ENCODE measurements at regions of chr17 and their contacts with region 1.

Region 1: GRCh38 chr17:67689534-67690177 is 28.1 kb upstream of the NOL11 start:
- DNase-seq: peak in 1 of 2 experiments; percentile 68
- H3K4me3 ChIP-seq: no peak overlapping the region
- H3K4me3 Mint-ChIP-seq: no peak overlapping the region
- H3K27ac Mint-ChIP-seq: no peak overlapping the region
- H3K4me1 ChIP-seq: no peaks in the 10 kb centered on the region
- H3K4me1 Mint-ChIP-seq: no peaks in the 10 kb centered on the region
- H3K27me3 ChIP-seq: no peaks in the 10 kb centered on the region
- H3K27me3 Mint-ChIP-seq: peaks cover 2% of the 10 kb centered on the region
- CTCF ChIP-seq: peak; percentile 67 to 76

Region 2: DNA sequence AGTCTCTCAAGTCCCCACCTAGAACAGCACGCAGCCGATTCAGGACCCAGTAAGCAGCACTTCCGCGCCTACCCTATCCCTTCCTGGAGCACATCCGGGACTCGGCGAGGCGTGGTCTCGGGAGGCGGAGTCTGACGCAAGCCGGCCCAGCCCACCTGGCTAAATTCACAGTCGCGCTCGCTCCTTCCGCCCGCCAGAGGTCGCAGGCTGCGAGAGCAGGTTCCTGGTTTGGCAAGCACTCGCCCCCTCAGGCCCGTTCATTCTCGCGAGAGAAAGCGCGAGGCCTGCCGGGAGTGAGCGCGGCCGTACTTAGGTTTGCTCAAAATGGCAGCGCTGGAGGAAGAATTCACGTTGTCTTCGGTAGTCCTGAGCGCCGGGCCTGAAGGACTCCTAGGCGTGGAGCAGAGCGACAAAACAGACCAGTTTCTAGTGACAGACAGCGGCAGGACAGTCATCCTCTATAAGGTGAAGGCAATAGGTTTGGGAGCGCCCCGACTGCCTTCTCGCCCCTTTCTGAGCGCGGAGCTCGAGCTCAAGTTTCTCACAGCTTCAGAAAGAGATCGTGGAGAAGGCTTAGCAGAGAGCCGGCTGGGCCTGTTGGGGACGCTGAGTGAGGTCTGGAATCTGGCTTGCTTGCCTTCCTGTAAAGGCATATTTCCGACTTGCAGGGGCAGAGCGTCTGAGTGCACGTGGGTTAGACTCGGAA is 28.1 kb after region 1 on chr17 and contains the start of gene NOL11:
- CTCF ChIA-PET with region 1: no interaction called
- POLR2A ChIA-PET with region 1: no interaction called
- intact Hi-C with region 1: no loop called
- DNase-seq: peak; percentile 99
- H3K4me3 ChIP-seq: peak within 1 kb of the TSS; percentile 65
- H3K4me3 Mint-ChIP-seq: peak within 1 kb of the TSS; percentile 99
- H3K27ac Mint-ChIP-seq: peak within 1 kb of the TSS; percentile 100
- H3K4me1 ChIP-seq: peaks cover 7% of the 10 kb centered on the region; the same call in 1 of the 2 replicates
- H3K4me1 Mint-ChIP-seq: no peaks in the 10 kb centered on the region
- H3K27me3 ChIP-seq: no peaks in the 10 kb centered on the region
- H3K27me3 Mint-ChIP-seq: no peaks in the 10 kb centered on the region
- CTCF ChIP-seq: peak; percentile 86 to 98
- total RNA-seq, gene NOL11: 69.0 and 73.6 TPM in 2 replicates

Region 3: GRCh38 chr17:67779098-67779672 is 89.5 kb after region 1 on chr17:
- CTCF ChIA-PET with region 1: no interaction called
- POLR2A ChIA-PET with region 1: no interaction called
- intact Hi-C with region 1: no loop called
- DNase-seq: peak in 1 of 2 experiments; percentile 21
- H3K4me3 ChIP-seq: no peak overlapping the region
- H3K4me3 Mint-ChIP-seq: no peak overlapping the region
- H3K27ac Mint-ChIP-seq: no peak overlapping the region
- H3K4me1 ChIP-seq: no peaks in the 10 kb centered on the region
- H3K4me1 Mint-ChIP-seq: no peaks in the 10 kb centered on the region
- H3K27me3 ChIP-seq: no peaks in the 10 kb centered on the region
- H3K27me3 Mint-ChIP-seq: no peaks in the 10 kb centered on the region
- CTCF ChIP-seq: peak; percentile 56 to 71

Region 4: GRCh38 chr17:67829331-67829730 is 139.7 kb after region 1 on chr17:
- CTCF ChIA-PET with region 1: no interaction called
- POLR2A ChIA-PET with region 1: no interaction called
- intact Hi-C with region 1: no loop called
- DNase-seq: no peak
- H3K4me3 ChIP-seq: no peak overlapping the region
- H3K4me3 Mint-ChIP-seq: no peak overlapping the region
- H3K27ac Mint-ChIP-seq: no peak overlapping the region
- H3K4me1 ChIP-seq: no peaks in the 10 kb centered on the region
- H3K4me1 Mint-ChIP-seq: peaks cover 19% of the 10 kb centered on the region
- H3K27me3 ChIP-seq: no peaks in the 10 kb centered on the region
- H3K27me3 Mint-ChIP-seq: no peaks in the 10 kb centered on the region
- CTCF ChIP-seq: no peak

Region 5: DNA sequence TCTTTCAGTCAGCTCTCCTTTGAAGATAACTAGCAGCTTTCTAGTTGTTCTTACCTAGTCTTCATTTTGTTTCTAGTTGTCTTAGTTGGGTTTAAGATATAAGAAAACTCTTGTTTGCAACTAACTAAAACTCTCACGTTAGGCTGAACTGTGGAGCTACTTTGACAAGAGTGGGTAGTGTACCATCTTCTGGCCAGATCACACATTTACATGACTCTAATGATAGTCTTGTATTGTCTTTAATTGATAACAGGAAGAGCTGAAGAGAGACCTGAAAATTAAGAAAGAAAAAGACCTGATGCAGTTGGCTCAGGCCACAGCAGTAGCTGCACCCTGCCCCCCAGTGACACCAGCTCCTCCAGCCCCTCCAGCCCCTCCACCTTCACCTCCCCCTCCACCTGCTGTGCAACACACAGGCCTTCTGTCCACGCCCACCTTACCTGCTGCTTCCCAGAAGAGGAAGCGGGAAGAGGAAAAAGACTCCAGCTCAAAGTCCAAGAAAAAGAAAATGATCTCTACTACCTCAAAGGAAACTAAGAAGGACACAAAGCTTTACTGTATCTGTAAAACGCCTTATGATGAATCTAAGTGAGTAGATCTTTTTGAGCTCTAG is 269.7 kb after region 1 on chr17:
- CTCF ChIA-PET with region 1: no interaction called
- POLR2A ChIA-PET with region 1: interaction called, 10 read pairs
- intact Hi-C with region 1: no loop called
- DNase-seq: peak in 1 of 2 experiments; percentile 21
- H3K4me3 ChIP-seq: no peak overlapping the region
- H3K4me3 Mint-ChIP-seq: no peak overlapping the region
- H3K27ac Mint-ChIP-seq: peak overlapping the region; percentile 48
- H3K4me1 ChIP-seq: peaks cover 8% of the 10 kb centered on the region; the same call in 1 of the 2 replicates
- H3K4me1 Mint-ChIP-seq: no peaks in the 10 kb centered on the region
- H3K27me3 ChIP-seq: no peaks in the 10 kb centered on the region
- H3K27me3 Mint-ChIP-seq: no peaks in the 10 kb centered on the region
- CTCF ChIP-seq: no peak

Region 6: GRCh38 chr17:68457539-68458259 is 768.0 kb after region 1 on chr17:
- CTCF ChIA-PET with region 1: no interaction called
- POLR2A ChIA-PET with region 1: no interaction called
- intact Hi-C with region 1: no loop called
- DNase-seq: peak; percentile 99 to 100
- H3K4me3 ChIP-seq: peak overlapping the region; percentile 59
- H3K4me3 Mint-ChIP-seq: peak overlapping the region; percentile 95
- H3K27ac Mint-ChIP-seq: peak overlapping the region; percentile 84
- H3K4me1 ChIP-seq: peaks cover 16% of the 10 kb centered on the region; the same call in 1 of the 2 replicates
- H3K4me1 Mint-ChIP-seq: peaks cover 13% of the 10 kb centered on the region
- H3K27me3 ChIP-seq: no peaks in the 10 kb centered on the region
- H3K27me3 Mint-ChIP-seq: peaks cover 3% of the 10 kb centered on the region
- CTCF ChIP-seq: no peak

Measured in Caco-2 (cell line).